ENCODE measurements at regions of chr15 and their contacts with region 1.

Region 1: GRCh38 chr15:41621200-41622193 is 38.7 kb upstream of the MGA start:
- DNase-seq: peak; percentile 89 to 92 (median 90)
- H3K4me3 ChIP-seq: peak overlapping the region; percentile 47
- H3K27ac ChIP-seq: peak overlapping the region; percentile 93 to 98
- H3K4me1 ChIP-seq: no peaks in the 10 kb centered on the region
- H3K27me3 ChIP-seq: no peaks in the 10 kb centered on the region
- CTCF ChIP-seq: no peak
- EP300 ChIP-seq: peak; percentile 55
- POLR2A ChIP-seq: peak; percentile 73

Region 2: DNA sequence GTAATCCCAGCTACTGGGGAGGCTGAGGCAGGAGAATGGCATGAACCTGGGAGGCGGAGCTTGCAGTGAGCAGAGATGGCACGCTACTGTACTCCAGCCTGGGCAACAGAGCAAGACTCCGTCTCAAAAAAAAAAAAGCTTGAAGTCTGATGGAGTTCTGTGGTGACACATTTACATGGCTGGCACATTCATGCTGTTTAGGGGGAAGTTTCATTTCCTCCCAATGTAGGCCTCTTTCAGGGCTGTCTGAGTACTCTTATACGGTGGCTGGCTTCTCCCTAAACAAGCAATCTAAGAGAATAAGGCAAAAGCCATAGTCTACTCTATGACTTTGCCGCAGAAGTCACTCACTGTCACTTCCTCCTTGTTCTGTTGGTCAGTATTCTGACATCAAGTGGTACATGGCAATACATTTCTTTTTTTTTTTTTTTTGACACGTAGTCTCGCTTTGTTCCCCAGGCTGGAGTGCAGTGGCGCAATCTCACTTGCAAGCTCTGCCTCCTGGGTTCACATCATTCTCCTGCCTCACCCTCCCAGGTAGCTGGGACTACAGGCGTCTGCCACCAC is 330.3 kb before region 1 on chr15:
- intact Hi-C with region 1: no loop called
- DNase-seq: no peak
- H3K4me3 ChIP-seq: no peak overlapping the region
- H3K27ac ChIP-seq: no peak overlapping the region
- H3K4me1 ChIP-seq: no peaks in the 10 kb centered on the region
- H3K27me3 ChIP-seq: no peaks in the 10 kb centered on the region
- CTCF ChIP-seq: no peak
- EP300 ChIP-seq: no peak
- POLR2A ChIP-seq: no peak

Region 3: DNA sequence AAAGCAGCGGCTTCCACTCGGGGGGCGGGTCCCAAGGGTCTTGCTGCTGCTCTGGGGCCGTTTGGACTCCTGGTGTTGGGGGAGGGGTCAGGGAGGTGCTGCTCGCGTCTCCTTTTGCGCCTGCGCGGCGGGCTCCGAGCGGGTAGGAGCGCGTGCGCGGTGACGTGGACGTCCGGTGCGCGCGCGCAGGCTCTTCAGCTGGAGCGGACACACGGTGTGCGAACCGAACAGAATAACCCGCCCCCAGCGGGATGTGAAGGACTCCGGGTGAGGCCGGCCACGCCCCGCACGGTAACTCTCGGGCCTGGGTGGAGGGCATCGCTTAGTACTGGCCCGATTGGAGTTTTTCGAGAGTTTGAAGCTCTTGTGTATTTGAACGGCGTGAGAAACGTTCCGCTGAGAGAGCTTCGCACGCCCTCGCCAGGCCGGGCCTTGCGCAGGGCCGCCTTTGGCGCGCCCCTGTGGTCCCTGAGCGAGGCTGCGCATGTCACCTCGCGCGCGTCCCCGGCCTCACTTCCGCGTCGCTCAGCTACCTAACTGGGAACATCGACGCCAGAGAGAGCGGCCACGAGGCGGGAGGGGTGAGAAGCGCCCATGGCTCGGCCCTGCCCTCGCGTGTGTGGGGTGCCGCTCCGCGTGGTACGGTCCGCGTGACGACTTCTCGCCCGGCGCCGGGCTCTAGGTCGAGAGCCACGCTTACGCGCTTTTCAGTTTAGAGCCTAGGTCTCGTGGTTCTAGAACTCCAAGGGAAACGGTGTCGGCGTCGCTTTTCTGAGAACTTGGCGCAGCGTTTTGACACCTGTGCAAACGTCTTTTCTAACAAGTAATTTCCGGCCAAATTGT is 39.0 kb after region 1 on chr15 and contains the start of gene MGA:
- intact Hi-C with region 1: loop called in 2 of 4 experiments (anchors 5 kb)
- DNase-seq: peak; percentile 88 to 93 (median 89)
- H3K4me3 ChIP-seq: peak within 1 kb of the TSS; percentile 30
- H3K27ac ChIP-seq: peak within 1 kb of the TSS; percentile 65 to 80
- H3K4me1 ChIP-seq: peaks cover 5% of the 10 kb centered on the region
- H3K27me3 ChIP-seq: no peaks in the 10 kb centered on the region
- CTCF ChIP-seq: peak in 2 of 3 donors; percentile 23 to 34
- EP300 ChIP-seq: no peak
- POLR2A ChIP-seq: peak; percentile 43
- total RNA-seq, gene MGA: 43.4 to 90.2 (median 61.6) TPM

Measured in ovary (tissue), 10 donors.